ENCODE measurements at regions of chr5 and their contacts with region 1.

Region 1: DNA sequence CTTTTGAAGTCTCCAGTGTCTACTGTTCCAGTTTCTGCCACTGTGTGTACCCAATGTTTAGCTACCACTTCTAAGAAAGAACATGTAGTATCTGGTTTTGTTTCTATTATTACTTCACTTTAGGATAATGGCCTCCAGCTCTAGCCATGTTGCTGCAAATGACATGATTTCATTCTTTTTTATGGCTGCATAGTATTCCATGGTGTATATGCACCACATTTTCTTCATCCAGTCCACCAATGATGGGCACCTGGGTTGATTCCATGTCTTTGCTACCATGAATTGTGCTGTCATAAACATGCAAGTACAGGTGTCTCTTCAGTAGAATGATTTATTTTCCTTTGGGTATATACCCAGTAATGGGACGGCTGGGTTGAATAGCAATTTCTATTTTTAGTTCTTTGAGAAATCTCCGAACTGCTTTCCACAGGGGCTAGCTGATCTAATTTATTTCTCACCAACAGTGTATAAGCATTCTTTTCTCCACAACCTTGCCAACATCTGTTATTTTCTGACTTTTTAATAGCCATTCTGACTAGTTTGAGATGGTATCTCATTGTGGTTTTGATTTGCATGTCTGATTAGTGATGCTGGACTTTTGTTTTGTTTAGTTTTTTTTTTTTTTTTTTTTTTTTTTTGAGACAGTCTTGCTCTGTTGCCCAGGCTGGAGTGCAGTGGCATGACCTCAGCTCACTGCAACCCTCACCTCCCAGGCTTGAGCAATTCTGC is 68.9 kb downstream of the WDR41 start:
- DNase-seq: no peak
- ATAC-seq: no peak
- H3K4me3 ChIP-seq: no peak overlapping the region
- H3K4me1 ChIP-seq: peaks cover 5% of the 10 kb centered on the region
- CTCF ChIP-seq: no peak

Region 2: GRCh38 chr5:76754668-76755078 is 668.5 kb before region 1 on chr5:
- intact Hi-C with region 1: no loop called
- DNase-seq: no peak
- ATAC-seq: no peak
- H3K4me3 ChIP-seq: no peak overlapping the region
- H3K4me1 ChIP-seq: no peaks in the 10 kb centered on the region
- CTCF ChIP-seq: no peak

Region 3: DNA sequence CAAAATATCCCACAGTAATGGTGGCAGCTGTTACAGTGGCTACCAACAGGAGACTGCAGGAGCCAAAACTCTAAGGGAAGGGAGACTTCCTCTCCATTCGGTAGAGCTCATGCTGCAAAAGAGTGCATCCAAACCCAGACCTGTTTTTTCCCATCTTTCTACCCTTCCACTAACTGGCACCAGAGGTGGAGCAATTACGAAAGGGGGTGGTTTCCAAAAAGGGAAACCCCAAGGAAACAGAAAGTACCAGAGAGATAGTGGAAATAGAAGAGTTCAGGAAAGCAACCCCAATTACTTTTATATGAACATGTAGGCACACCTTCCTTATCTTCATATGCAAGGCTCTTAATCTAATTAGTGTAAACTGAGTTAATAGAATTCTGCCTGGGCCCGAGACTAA is 76.3 kb after region 1 on chr5:
- intact Hi-C with region 1: loop called in 1 of 2 experiments (anchors 5 kb)
- DNase-seq: no peak
- ATAC-seq: no peak
- H3K4me3 ChIP-seq: no peak overlapping the region
- H3K4me1 ChIP-seq: no peaks in the 10 kb centered on the region
- CTCF ChIP-seq: no peak

Measured in mucosa of descending colon (tissue), 3 donors.